H1 (cell line): ENCODE measurements at regions of chr16 and their contacts with region 1.

Region 1: DNA sequence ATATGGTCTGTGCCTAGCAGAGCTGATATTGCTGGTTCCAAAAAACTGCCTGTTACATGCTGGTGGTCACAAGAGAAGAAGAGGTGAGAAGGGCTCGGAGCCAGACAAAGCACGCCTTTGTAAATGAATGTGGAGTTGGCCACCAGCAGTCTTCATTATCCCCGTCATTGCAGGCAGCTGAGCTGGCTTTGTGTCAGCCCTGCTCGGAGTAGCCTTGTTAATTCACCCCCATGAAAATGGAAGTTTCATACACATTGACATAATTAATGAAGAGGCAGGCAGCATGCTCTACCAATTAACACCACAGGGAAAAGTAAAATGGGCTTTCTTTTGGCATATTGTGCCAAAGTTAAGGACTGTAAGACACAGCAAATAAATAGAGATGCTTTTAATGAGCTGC is 113.7 kb upstream of the RBFOX1 start:
- DNase-seq: peak in 1 of 2 experiments; percentile 46
- H3K4me3 ChIP-seq: no peak overlapping the region
- H3K27ac ChIP-seq: no peak overlapping the region
- H3K4me1 ChIP-seq: peaks cover 6 to 20% (median 8%) of the 10 kb centered on the region in 4 experiments; a peak in 6 of 7 replicates
- H3K27me3 ChIP-seq: 0 out of 7 replicates have a peak, but pooled peaks cover 0 to 2% (median 0%) of the 10 kb centered on the region in 4 experiments
- CTCF ChIP-seq: no peak
- EP300 ChIP-seq: no peak
- POLR2A ChIP-seq: no peak
- RAD21 ChIP-seq: no peak

Region 2: GRCh38 chr16:7206469-7206868 is 12.5 kb before region 1 on chr16:
- CTCF ChIA-PET with region 1: interaction called, 12 read pairs
- POLR2A ChIA-PET with region 1: interaction called, 4 read pairs
- DNase-seq: no peak
- H3K4me3 ChIP-seq: no peak overlapping the region
- H3K27ac ChIP-seq: no peak overlapping the region
- H3K4me1 ChIP-seq: peaks cover 1 to 5% (median 4%) of the 10 kb centered on the region in 4 experiments; a peak in 4 of 7 replicates
- H3K27me3 ChIP-seq: no peaks in the 10 kb centered on the region
- CTCF ChIP-seq: no peak
- EP300 ChIP-seq: no peak
- POLR2A ChIP-seq: no peak
- RAD21 ChIP-seq: no peak

Region 3: DNA sequence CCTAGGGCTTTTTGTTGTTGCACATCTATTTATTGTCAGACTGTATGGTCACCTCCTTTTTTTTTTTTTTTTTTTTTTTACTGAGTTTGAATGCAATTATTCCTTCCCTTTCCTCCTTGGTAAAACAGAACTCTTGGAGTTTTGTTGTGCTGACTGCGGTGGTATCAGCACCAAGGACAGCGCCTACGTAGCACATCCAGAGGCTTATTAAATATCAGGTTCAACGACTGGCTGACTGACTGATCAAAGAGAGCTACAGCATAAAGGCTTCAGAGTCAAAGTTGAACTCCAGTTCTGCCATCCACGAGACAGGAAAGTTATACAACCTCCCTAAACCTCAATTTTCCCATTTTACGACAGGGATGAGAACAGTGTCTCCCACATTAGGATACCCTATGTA is 27.6 kb after region 1 on chr16:
- CTCF ChIA-PET with region 1: no interaction called
- POLR2A ChIA-PET with region 1: no interaction called
- DNase-seq: peak in 1 of 2 experiments; percentile 59
- H3K4me3 ChIP-seq: no peak overlapping the region
- H3K27ac ChIP-seq: no peak overlapping the region
- H3K4me1 ChIP-seq: no peaks in the 10 kb centered on the region
- H3K27me3 ChIP-seq: no peaks in the 10 kb centered on the region
- CTCF ChIP-seq: no peak
- EP300 ChIP-seq: no peak
- POLR2A ChIP-seq: no peak
- RAD21 ChIP-seq: no peak